Heart right ventricle (tissue), 16 donors: ENCODE measurements at regions of chr7 and their contacts with region 1.

Region 1: GRCh38 chr7:131302876-131303707 is 24.6 kb upstream of the MKLN1 start:
- DNase-seq: peak in 1 of 2 donors; percentile 23
- ATAC-seq: peak; percentile 36 to 66 (median 49)
- H3K4me3 ChIP-seq: no peak overlapping the region
- H3K27ac ChIP-seq: peak overlapping the region in 9 of 10 donors; percentile 3 to 78 (median 48)
- H3K4me1 ChIP-seq: peaks cover 0 to 40% (median 23%) of the 10 kb centered on the region in 9 donors
- H3K27me3 ChIP-seq: no peaks in the 10 kb centered on the region
- CTCF ChIP-seq: peak in 8 of 9 donors; percentile 34 to 72 (median 59)

Region 2: DNA sequence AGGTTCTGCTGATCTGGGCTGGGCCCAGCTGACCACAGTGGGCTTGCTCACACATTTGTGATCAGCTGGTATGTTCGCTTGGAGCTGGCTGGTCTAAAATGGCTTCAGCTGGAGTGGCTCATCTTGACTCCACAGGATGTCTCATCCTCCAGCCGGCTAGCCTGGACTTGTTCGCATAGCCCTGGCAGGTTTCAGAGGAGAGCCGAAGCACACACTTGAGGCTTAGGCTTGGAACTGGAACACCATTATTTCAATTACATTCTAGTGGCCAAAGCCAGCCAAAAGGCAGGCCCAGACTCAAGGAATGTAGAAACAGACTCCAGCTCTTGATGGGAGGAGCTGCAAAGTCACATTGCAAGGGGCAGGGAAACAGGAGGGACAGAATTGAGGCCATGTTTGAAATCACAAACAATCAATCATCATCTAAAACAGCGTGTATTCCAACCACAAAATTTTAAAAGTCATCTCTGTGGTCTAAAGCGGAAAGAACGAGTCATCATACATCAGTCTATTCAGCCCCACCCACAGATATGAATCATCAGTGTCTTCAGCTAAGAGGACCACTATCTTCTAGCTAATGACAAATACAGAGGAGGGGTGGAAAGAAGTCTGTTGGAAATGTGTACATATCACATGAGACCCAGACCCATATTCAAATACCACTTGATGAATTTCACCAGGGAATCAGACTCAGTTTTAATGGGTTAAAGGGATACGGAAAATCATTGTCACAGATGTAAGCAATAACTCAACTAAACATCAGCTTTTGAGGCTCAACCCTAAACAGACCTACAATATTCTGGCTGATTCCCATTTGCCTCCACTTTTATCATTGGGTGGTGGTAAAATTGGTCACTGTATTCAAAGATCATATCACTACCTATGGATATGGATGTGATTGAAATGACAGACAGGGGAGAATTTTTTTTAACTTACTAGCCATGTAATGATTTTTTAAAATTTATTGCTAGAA is 114.4 kb before region 1 on chr7:
- intact Hi-C with region 1: loop called in 1 of 10 experiments (anchors 5 kb)
- DNase-seq: no peak
- ATAC-seq: peak in 5 of 8 donors; percentile 17 to 54 (median 49)
- H3K4me3 ChIP-seq: no peak overlapping the region
- H3K27ac ChIP-seq: peak overlapping the region in 1 of 10 donors; percentile 78
- H3K4me1 ChIP-seq: peaks cover 0 to 38% (median 0%) of the 10 kb centered on the region in 9 donors
- H3K27me3 ChIP-seq: no peaks in the 10 kb centered on the region
- CTCF ChIP-seq: no peak

Region 3: DNA sequence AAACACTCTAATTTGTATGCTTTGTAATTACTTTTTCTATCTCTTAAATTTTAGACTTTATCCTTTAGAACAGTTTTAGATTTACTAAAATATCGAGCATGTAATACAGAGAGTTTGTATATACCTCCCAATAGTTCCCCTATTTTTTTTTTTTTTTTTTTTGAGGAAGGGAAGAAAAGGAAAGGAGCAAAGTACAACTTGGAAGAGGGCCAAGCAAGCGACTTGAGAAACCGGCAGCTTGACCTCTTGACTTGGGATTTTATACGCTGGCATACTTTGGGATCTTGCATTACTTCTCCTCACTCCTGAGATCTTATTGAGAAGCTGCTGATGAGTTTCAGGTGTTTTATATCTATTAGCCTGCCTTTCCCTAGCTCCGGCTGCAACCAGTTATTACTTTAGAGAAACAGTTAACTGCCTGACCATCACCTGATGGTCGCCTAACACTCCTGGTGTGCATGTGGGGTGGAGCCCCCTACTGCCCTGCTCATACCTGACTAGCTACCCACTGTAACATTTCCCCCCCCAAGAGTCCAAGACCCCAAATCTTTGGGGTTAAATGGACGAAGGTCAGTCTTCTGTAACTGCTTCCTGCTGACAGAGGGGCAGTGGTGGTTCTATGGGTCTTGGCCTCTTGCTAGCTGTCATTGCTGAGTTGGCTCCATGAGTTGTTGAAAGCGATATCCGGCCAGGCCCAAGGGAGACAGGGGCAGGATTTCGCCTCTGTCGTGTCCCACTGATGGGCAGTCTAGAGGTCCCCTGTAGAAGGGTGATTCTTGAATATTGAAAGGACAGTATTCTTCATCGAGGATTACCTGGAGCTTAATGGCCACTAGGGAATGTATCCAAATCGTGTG is 53.1 kb after region 1 on chr7:
- intact Hi-C with region 1: no loop called
- DNase-seq: peak in 1 of 2 donors; percentile 32
- ATAC-seq: peak in 2 of 8 donors; percentile 19 to 28
- H3K4me3 ChIP-seq: no peak overlapping the region
- H3K27ac ChIP-seq: no peak overlapping the region
- H3K4me1 ChIP-seq: peaks cover 0 to 87% (median 48%) of the 10 kb centered on the region in 9 donors
- H3K27me3 ChIP-seq: no peaks in the 10 kb centered on the region
- CTCF ChIP-seq: no peak

Region 4: GRCh38 chr7:132536654-132537395 is 1233.7 kb after region 1 on chr7:
- intact Hi-C with region 1: no loop called
- DNase-seq: no peak
- ATAC-seq: peak in 1 of 8 donors; percentile 9
- H3K4me3 ChIP-seq: no peak overlapping the region
- H3K27ac ChIP-seq: no peak overlapping the region
- H3K4me1 ChIP-seq: peaks cover 0 to 17% (median 0%) of the 10 kb centered on the region in 9 donors
- H3K27me3 ChIP-seq: no peaks in the 10 kb centered on the region
- CTCF ChIP-seq: no peak